PC-3 (cell line): ENCODE measurements at regions of chr1 and their contacts with region 1.

Region 1: GRCh38 chr1:46991083-46991923 is 32.2 kb upstream of the CYP4X1 start:
- DNase-seq: peak; percentile 63
- ATAC-seq: peak; percentile 46
- H3K4me3 ChIP-seq: no peak overlapping the region
- H3K27ac ChIP-seq: no peak overlapping the region
- H3K4me1 ChIP-seq: no peaks in the 10 kb centered on the region
- H3K27me3 ChIP-seq: 0 out of 2 replicates have a peak, but pooled peaks cover 5% of the 10 kb centered on the region
- CTCF ChIP-seq: peak; percentile 65

Region 2: GRCh38 chr1:46747683-46748288 is 243.5 kb before region 1 on chr1:
- CTCF ChIA-PET with region 1: no interaction called
- POLR2A ChIA-PET with region 1: no interaction called
- intact Hi-C with region 1: loop called (anchors 2 kb)
- DNase-seq: peak; percentile 78
- ATAC-seq: peak; percentile 99
- H3K4me3 ChIP-seq: no peak overlapping the region
- H3K27ac ChIP-seq: no peak overlapping the region
- H3K4me1 ChIP-seq: peaks cover 19% of the 10 kb centered on the region
- H3K27me3 ChIP-seq: peaks cover 16% of the 10 kb centered on the region
- CTCF ChIP-seq: peak; percentile 84

Region 3: GRCh38 chr1:46940307-46940706 is 51.0 kb before region 1 on chr1:
- CTCF ChIA-PET with region 1: no interaction called
- POLR2A ChIA-PET with region 1: no interaction called
- intact Hi-C with region 1: loop called (anchors 1 kb)
- DNase-seq: no peak
- ATAC-seq: no peak
- H3K4me3 ChIP-seq: no peak overlapping the region
- H3K27ac ChIP-seq: no peak overlapping the region
- H3K4me1 ChIP-seq: no peaks in the 10 kb centered on the region
- H3K27me3 ChIP-seq: peaks cover 14% of the 10 kb centered on the region; the same call in 1 of the 2 replicates
- CTCF ChIP-seq: no peak